Body of pancreas (tissue), 4 donors: ENCODE measurements at regions of chr2 and their contacts with region 1.

Region 1: DNA sequence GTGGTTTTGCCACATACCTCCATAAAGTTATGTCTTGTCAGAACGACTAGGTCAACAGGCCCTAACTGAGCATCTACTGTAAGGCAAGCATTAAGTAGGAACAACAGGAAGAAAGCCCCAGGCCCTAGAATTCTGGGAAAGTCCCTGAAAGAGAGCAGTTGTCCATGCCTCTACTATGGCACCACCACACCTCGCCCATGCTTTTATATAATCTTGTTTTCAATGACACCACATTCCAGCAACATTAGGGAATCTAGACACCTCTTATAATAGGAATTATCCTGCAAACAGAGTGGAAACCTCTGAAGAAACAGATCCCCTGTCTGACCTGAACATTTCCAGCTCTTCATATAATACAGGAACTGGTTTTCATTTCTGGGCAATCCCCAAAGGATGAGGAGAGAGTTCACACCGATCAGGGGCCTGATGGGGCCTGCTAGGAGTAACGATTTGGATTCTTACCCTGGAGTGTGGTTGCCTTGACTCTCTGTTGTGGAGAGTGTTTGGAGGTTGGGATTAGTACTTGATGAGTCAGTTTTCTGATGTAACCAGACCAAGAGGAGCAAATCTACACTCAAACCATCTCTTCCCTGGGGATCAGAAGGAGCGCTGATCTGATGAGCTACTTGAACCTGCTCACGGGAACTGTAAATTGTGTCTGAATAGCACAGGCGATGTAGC is 31.9 kb upstream of the CEP68 start:
- DNase-seq: no peak
- ATAC-seq: no peak
- H3K4me3 ChIP-seq: no peak overlapping the region
- H3K27ac ChIP-seq: no peak overlapping the region
- H3K4me1 ChIP-seq: peaks cover 11% of the 10 kb centered on the region
- H3K27me3 ChIP-seq: no peaks in the 10 kb centered on the region
- CTCF ChIP-seq: no peak
- POLR2A ChIP-seq: no peak

Region 2: GRCh38 chr2:64928813-64929212 is 95.5 kb before region 1 on chr2:
- intact Hi-C with region 1: loop called (anchors 5 kb)
- DNase-seq: no peak
- ATAC-seq: no peak
- H3K4me3 ChIP-seq: no peak overlapping the region
- H3K27ac ChIP-seq: no peak overlapping the region
- H3K4me1 ChIP-seq: no peaks in the 10 kb centered on the region
- H3K27me3 ChIP-seq: no peaks in the 10 kb centered on the region
- CTCF ChIP-seq: no peak
- POLR2A ChIP-seq: no peak